Colonic mucosa (tissue), 4 donors: ENCODE measurements at regions of chr2 and their contacts with region 1.

Region 1: GRCh38 chr2:210617732-210618330 is 61.4 kb downstream of the CPS1 start:
- DNase-seq: peak; percentile 18
- H3K4me3 ChIP-seq: no peak overlapping the region
- H3K27ac ChIP-seq: no peak overlapping the region
- H3K4me1 ChIP-seq: no peaks in the 10 kb centered on the region
- H3K27me3 ChIP-seq: no peaks in the 10 kb centered on the region
- CTCF ChIP-seq: peak; percentile 34

Region 2: DNA sequence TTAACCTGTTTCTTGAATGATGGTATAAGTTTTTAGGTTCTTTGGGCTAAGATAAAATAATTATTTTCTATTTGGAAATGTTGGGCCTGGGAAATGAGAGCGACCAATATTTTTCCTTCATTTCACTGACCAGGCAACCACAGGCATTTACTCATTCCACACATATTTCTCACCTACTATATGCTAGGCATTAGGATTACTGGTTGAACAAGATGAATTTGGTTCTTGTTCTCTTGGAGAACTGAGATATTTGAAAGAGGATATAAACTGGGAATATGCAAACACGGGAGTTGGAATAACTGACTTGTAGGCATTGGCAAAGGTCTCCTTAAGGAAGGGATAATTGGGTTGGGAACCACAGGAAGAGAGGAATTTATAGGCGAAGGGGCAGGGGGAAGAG is 298.9 kb before region 1 on chr2:
- intact Hi-C with region 1: no loop called
- DNase-seq: no peak
- H3K4me3 ChIP-seq: no peak overlapping the region
- H3K27ac ChIP-seq: no peak overlapping the region
- H3K4me1 ChIP-seq: no peaks in the 10 kb centered on the region
- H3K27me3 ChIP-seq: no peaks in the 10 kb centered on the region
- CTCF ChIP-seq: no peak

Region 3: GRCh38 chr2:211035548-211036185 is 417.8 kb after region 1 on chr2:
- intact Hi-C with region 1: loop called (anchors 10 kb)
- DNase-seq: peak; percentile 17
- H3K4me3 ChIP-seq: no peak overlapping the region
- H3K27ac ChIP-seq: no peak overlapping the region
- H3K4me1 ChIP-seq: no peaks in the 10 kb centered on the region
- H3K27me3 ChIP-seq: no peaks in the 10 kb centered on the region
- CTCF ChIP-seq: peak; percentile 32